ENCODE measurements at regions of chr1 and their contacts with region 1.

Region 1: DNA sequence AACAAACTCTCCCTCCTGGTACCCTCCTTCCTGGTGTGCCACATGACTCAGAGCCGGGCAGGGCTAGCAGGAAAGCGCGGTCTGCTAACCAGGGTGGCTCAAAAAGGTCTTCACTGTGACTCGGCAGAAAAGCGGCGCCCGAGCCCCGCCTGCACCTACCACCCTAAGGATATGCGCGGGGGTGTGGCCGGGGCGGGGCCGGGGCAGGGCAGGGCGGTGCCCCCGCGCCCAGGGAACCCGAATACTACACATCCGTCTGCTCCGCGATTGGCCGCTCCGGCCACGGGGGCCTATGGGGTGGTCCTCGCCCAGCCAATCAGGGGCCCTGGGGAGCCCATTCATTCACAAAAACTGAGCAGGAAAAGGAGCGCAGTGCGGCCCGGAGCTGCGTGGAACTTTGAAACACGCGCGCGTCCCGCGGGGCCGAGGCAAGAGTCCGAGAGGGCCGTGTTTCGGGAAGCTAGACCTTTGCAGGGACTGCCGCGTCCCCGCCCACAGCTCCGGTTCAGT is 1.7 kb downstream of the LRP8 start:
- DNase-seq: peak; percentile 98
- ATAC-seq: peak; percentile 89
- H3K4me3 Mint-ChIP-seq: peak overlapping the region; percentile 92
- H3K27ac Mint-ChIP-seq: peak overlapping the region; percentile 93
- H3K4me1 Mint-ChIP-seq: peaks cover 19% of the 10 kb centered on the region
- H3K27me3 Mint-ChIP-seq: no peaks in the 10 kb centered on the region

Region 2: GRCh38 chr1:52033190-52034049 is 1292.7 kb before region 1 on chr1 and contains the start of gene KTI12:
- CTCF ChIA-PET with region 1: no interaction called
- POLR2A ChIA-PET with region 1: no interaction called
- intact Hi-C with region 1: loop called in 1 of 2 experiments (anchors 5 kb)
- DNase-seq: peak; percentile 93
- ATAC-seq: peak; percentile 94
- H3K4me3 Mint-ChIP-seq: peak within 1 kb of the TSS; percentile 91
- H3K27ac Mint-ChIP-seq: peak within 1 kb of the TSS; percentile 93
- H3K4me1 Mint-ChIP-seq: peaks cover 32% of the 10 kb centered on the region
- H3K27me3 Mint-ChIP-seq: no peaks in the 10 kb centered on the region
- total RNA-seq, gene KTI12: 7.6 to 12.3 TPM

Region 3: DNA sequence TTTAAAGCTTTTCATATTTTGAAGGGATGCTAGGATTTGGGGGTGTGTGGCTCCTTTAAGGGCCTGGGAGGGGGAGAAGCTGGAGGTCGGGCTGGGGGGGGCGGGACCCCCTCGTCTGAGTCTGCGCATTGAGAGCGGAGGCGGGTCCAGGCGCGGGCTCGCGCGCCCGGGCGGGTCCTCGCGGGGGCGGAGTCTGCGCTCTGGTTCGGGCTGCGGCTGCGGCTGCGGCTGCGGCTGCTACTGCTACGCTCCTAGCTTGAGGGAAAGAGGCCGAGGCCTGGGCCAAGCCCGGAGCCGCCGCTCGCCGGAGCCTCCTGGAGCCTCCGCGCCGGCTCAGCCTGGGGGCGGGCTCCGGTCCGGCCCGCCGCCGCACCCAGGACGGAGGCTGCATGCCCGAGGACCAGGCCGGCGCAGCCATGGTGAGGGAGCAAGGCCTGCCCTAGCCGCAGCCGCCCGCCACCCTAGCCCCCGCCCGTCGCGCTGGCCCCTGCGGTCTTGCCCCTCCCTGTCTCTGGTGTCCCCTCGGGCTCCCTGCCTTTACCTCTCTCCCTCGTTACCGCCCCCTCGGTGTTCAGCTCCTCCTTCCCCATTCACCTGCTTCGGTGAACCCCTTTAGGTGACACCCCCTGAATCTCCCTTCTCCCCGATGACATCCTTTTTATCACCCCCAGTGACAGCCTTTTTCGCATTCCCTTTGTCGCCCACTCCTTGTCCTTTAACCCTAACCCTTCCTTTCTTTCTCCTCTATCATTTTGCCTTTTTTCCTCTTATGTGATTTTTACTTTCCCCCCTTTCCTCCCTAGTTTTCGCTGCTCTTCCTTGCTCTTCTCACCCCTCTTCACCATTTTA is 599.7 kb before region 1 on chr1 and contains the start of gene ZYG11B:
- CTCF ChIA-PET with region 1: no interaction called
- POLR2A ChIA-PET with region 1: no interaction called
- intact Hi-C with region 1: loop called in 1 of 2 experiments (anchors 1 kb)
- DNase-seq: peak; percentile 96
- ATAC-seq: peak; percentile 91
- H3K4me3 Mint-ChIP-seq: peak within 1 kb of the TSS; percentile 93
- H3K27ac Mint-ChIP-seq: peak within 1 kb of the TSS; percentile 85
- H3K4me1 Mint-ChIP-seq: peaks cover 32% of the 10 kb centered on the region
- H3K27me3 Mint-ChIP-seq: no peaks in the 10 kb centered on the region
- total RNA-seq, gene ZYG11B: 12.9 to 14.3 TPM

Region 4: GRCh38 chr1:53238197-53239155 is 87.7 kb before region 1 on chr1 and contains the start of gene MAGOH:
- CTCF ChIA-PET with region 1: no interaction called
- POLR2A ChIA-PET with region 1: no interaction called
- intact Hi-C with region 1: loop called (anchors 1 to 2 kb)
- DNase-seq: peak; percentile 95
- ATAC-seq: peak; percentile 98
- H3K4me3 Mint-ChIP-seq: peak within 1 kb of the TSS; percentile 96
- H3K27ac Mint-ChIP-seq: peak within 1 kb of the TSS; percentile 93
- H3K4me1 Mint-ChIP-seq: peaks cover 24% of the 10 kb centered on the region
- H3K27me3 Mint-ChIP-seq: no peaks in the 10 kb centered on the region
- total RNA-seq, gene MAGOH: 73.7 to 92.3 TPM

Region 5: GRCh38 chr1:53393325-53393792 is 67.2 kb after region 1 on chr1:
- CTCF ChIA-PET with region 1: interaction called, 3 read pairs
- POLR2A ChIA-PET with region 1: no interaction called
- intact Hi-C with region 1: loop called (anchors 1 to 2 kb)
- DNase-seq: peak; percentile 83
- ATAC-seq: peak; percentile 94
- H3K4me3 Mint-ChIP-seq: no peak overlapping the region
- H3K27ac Mint-ChIP-seq: no peak overlapping the region
- H3K4me1 Mint-ChIP-seq: no peaks in the 10 kb centered on the region
- H3K27me3 Mint-ChIP-seq: no peaks in the 10 kb centered on the region

Region 6: GRCh38 chr1:53945433-53946251 is 619.5 kb after region 1 on chr1 and contains the start of gene IFT25:
- CTCF ChIA-PET with region 1: no interaction called
- POLR2A ChIA-PET with region 1: no interaction called
- intact Hi-C with region 1: loop called (anchors 1 to 5 kb)
- DNase-seq: peak; percentile 99
- ATAC-seq: peak; percentile 79
- H3K4me3 Mint-ChIP-seq: peak within 1 kb of the TSS; percentile 95
- H3K27ac Mint-ChIP-seq: peak within 1 kb of the TSS; percentile 89
- H3K4me1 Mint-ChIP-seq: peaks cover 50% of the 10 kb centered on the region
- H3K27me3 Mint-ChIP-seq: no peaks in the 10 kb centered on the region
- total RNA-seq, gene IFT25: 56.6 to 62.0 TPM

Measured in activated CD4-positive, alpha-beta T cell treated with anti-CD3 and anti-CD28 coated beads for 36 hours (primary cell).